ENCODE measurements at regions of chr17 and their contacts with region 1.

Region 1: DNA sequence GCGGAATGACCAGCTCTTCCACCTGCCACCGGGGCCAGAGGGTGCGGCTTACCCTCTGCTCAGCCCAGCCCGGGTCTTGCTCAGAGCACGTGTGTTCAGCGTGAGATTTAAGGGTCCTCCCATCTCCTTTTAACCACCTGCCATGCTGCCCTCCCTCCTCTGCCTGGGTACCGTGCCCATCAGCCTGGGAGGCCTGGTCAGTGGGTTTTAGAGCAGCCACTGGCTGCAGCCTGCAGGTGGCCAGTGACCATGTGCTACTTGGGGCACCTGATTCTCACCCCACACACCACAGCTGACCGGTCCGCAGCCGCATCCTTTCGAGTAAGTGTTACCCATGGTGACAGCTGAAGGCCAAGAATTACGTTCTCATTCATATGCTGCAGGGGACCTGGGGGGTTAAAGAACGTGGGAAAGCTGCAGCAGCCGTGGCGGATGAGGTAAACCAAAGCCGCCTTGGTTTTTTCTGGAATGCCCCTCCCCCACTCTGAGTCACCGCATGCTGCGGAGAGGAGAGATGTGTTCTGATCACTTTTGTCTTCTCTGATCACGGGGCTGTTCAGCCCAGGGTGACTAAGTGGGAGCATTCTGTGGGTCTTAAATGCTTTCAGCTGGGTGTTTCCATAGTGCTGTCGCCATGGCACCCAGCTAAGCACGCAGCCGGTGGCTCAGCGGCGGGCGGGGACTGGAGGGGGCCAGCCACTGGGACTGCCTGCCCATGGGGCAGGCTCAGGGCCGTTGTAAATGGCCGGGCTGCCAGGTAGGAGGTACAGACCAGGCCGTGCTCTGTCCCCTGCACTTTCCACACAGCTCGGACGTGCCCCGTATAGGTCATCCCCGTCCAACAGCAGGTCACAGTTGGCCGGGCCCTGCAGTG is 59.8 kb downstream of the BAIAP2 start:
- DNase-seq: no peak
- H3K4me3 ChIP-seq: no peak overlapping the region
- H3K27ac ChIP-seq: peak overlapping the region; percentile 73 to 76
- H3K4me1 ChIP-seq: peaks cover 22% of the 10 kb centered on the region
- H3K27me3 ChIP-seq: no peaks in the 10 kb centered on the region
- CTCF ChIP-seq: peak in 1 of 4 experiments; percentile 2
- POLR2A ChIP-seq: no peak

Region 2: GRCh38 chr17:80991645-80992076 is 103.1 kb before region 1 on chr17 and contains the start of gene CHMP6:
- intact Hi-C with region 1: loop called (anchors 2 kb)
- DNase-seq: peak; percentile 61
- H3K4me3 ChIP-seq: peak within 1 kb of the TSS; percentile 96 to 100
- H3K27ac ChIP-seq: peak within 1 kb of the TSS; percentile 45 to 69
- H3K4me1 ChIP-seq: peaks cover 12% of the 10 kb centered on the region
- H3K27me3 ChIP-seq: no peaks in the 10 kb centered on the region
- CTCF ChIP-seq: peak; percentile 14 to 77 (median 50)
- POLR2A ChIP-seq: no peak
- total RNA-seq, gene CHMP6: 30.6 to 35.3 TPM

Region 3: DNA sequence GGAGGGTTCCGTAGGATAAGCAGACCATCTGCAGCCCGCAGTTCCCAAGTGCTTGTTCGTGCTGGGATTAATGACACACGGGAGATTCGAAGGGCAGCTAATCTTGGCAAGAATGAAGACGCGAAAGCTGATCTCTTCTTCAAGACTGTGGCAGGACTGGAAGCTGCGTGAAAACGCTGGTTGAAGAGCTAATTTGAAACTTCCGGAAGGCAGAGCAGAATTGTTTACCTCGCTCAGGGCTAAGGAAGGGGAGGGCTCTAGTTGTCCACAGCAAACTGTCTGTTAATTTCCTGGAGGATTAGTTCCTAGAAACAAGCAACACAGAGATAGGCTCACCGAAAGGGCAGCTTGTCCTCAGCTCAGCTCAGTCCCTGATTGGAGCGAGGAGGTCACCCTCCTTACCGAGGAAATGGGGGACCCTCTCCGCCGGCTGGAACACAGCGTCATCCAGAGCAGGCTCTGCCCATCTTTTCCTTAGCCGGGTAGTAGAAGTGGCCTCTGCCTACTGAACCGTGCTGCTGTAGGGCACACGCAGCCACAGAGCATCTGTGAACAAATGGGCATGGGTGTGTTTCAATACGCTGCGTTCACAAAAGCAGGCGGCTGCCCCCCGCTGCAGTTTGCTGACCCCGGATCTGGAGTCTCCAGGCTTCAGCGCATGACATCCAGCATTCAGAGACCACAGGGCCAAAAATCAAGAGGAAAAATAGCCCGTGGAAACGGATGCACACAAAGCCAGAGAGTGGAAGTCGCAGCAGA is 76.5 kb before region 1 on chr17:
- intact Hi-C with region 1: loop called (anchors 1 kb)
- DNase-seq: peak; percentile 56
- H3K4me3 ChIP-seq: peak overlapping the region; percentile 4 to 19
- H3K27ac ChIP-seq: peak overlapping the region; percentile 80 to 83
- H3K4me1 ChIP-seq: no peaks in the 10 kb centered on the region
- H3K27me3 ChIP-seq: no peaks in the 10 kb centered on the region
- CTCF ChIP-seq: no peak
- POLR2A ChIP-seq: peak; percentile 26

Region 4: GRCh38 chr17:81034779-81035388 is 59.9 kb before region 1 on chr17 and contains the start of gene BAIAP2:
- intact Hi-C with region 1: loop called (anchors 2 kb)
- DNase-seq: peak; percentile 96
- H3K4me3 ChIP-seq: peak within 1 kb of the TSS; percentile 65 to 75
- H3K27ac ChIP-seq: peak within 1 kb of the TSS; percentile 90 to 95
- H3K4me1 ChIP-seq: peaks cover 32% of the 10 kb centered on the region
- H3K27me3 ChIP-seq: no peaks in the 10 kb centered on the region
- CTCF ChIP-seq: no peak
- POLR2A ChIP-seq: peak; percentile 97
- total RNA-seq, gene BAIAP2: 125 to 148 TPM

Region 5: GRCh38 chr17:81057079-81057730 is 37.5 kb before region 1 on chr17:
- intact Hi-C with region 1: loop called (anchors 5 kb)
- DNase-seq: peak; percentile 97
- H3K4me3 ChIP-seq: no peak overlapping the region
- H3K27ac ChIP-seq: peak overlapping the region; percentile 96 to 98
- H3K4me1 ChIP-seq: peaks cover 66% of the 10 kb centered on the region
- H3K27me3 ChIP-seq: no peaks in the 10 kb centered on the region
- CTCF ChIP-seq: peak in 1 of 4 experiments; percentile 9
- POLR2A ChIP-seq: peak; percentile 25